Naive thymus-derived CD8-positive, alpha-beta T cell (primary cell): ENCODE measurements at regions of chr21 and their contacts with region 1.

Region 1: DNA sequence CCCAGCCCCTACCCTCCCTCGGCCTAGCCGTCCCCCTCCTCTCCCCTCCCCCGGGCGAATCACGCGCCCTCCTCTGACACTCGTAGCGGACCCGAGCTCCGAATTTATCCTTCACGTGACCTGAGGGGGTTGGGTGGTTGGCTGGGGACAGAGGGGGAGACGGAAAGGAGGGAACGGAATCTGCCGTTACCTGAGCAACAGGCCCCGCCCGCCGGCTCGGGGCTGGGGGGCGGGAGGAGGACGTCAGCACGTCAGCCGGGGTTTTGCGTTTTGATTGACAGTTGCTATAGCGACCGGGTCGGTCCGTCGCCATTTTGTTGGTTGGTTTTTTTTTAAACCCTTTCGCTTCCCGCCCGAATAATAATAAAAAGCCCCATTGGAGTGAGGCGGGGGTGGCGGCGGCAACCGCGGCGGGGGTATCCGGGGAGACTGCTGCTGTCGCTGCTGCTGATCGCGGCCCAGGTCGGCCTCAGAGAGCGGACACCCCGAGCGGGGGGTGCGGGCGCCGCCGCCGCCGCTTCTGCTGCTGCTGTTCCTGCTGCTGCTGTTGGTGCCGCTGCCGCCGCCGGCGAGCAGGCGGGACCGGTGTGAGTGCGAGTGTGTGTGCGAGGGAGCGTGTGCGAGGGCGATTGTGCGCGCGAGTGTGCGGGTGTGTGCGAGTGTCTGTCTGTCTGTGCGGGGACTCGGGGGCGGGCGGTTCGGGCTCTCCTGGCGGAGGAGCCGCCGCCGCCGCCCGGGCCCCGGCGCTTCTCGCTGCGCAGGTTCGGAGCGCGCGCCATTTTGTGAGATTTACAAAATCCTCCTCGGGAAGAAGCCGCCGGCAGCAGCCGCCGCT is at the start of gene DYRK1A:
- DNase-seq: peak; percentile 95 to 99 (median 99)
- ATAC-seq: peak; percentile 77 to 85
- H3K4me3 Mint-ChIP-seq: peak within 1 kb of the TSS; percentile 91 to 100 (median 99)
- H3K27ac Mint-ChIP-seq: peak within 1 kb of the TSS; percentile 98 to 100 (median 99)
- H3K4me1 Mint-ChIP-seq: peaks cover 23 to 52% (median 50%) of the 10 kb centered on the region in 4 donors
- H3K27me3 Mint-ChIP-seq: peaks cover 0 to 2% (median 0%) of the 10 kb centered on the region in 5 donors
- polyA plus RNA-seq, gene DYRK1A: 1.8 to 5.4 (median 2.2) TPM

Region 2: GRCh38 chr21:37220981-37221664 is 145.6 kb before region 1 on chr21:
- POLR2A ChIA-PET with region 1: interaction called, 11 read pairs
- DNase-seq: peak; percentile 86 to 95 (median 90)
- ATAC-seq: peak; percentile 78 to 81
- H3K4me3 Mint-ChIP-seq: peak overlapping the region; percentile 80 to 96 (median 89)
- H3K27ac Mint-ChIP-seq: peak overlapping the region; percentile 81 to 98 (median 95)
- H3K4me1 Mint-ChIP-seq: peaks cover 21 to 61% (median 44%) of the 10 kb centered on the region in 4 donors
- H3K27me3 Mint-ChIP-seq: no peaks in the 10 kb centered on the region

Region 3: GRCh38 chr21:37563641-37564340 is 197.1 kb after region 1 on chr21:
- POLR2A ChIA-PET with region 1: interaction called, 13 read pairs
- DNase-seq: peak; percentile 85 to 95 (median 88)
- ATAC-seq: peak; percentile 84 to 89
- H3K4me3 Mint-ChIP-seq: peak overlapping the region; percentile 95 to 99 (median 98)
- H3K27ac Mint-ChIP-seq: peak overlapping the region; percentile 97 to 100 (median 99)
- H3K4me1 Mint-ChIP-seq: peaks cover 8 to 25% (median 18%) of the 10 kb centered on the region in 4 donors
- H3K27me3 Mint-ChIP-seq: peaks cover 0 to 1% (median 0%) of the 10 kb centered on the region in 5 donors